Esophagus squamous epithelium (tissue), 5 donors: ENCODE measurements at regions of chr3 and their contacts with region 1.

Region 1: DNA sequence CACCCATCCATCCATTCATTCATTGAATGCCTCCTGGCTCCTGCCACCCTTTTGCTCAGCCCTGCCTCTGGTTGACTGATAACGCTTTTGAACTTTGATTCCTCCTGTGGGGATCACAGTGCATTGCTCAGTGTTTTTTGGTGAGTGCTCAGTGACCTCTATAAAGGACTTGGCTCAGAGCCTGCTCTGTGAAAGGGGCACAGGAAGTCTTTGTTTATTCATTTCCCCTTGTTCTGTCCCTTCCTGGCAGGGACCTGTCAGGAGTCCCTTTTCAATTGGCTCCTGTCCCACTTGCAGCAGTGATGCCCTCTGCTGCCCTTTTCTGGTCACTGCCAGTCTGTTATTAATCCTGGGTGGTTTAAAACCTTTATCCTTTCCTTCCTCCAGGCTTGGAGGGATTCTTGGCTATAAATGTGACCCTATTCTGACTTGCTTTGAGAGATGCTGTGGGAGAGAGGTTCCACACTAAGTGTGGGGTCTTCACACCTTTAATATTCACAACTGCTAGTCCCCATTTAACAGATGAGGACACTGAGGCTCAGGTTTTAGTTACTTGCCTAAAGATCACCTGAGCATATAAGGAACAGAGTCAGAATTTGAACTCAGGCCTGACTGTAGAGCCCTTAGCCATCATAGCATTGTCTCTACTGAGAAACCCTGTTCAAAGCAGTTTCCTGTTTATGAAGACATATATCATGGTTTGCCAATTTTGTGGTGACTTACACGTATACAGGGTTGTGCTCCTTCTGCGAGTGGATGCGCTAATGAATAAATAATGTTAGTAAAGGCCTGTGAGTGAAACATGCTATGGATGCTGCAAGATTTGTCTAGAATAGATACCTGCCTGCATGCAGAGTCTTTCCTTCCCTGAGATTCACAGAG is 23.2 kb upstream of the TATDN2 start:
- DNase-seq: peak; percentile 27
- H3K4me3 ChIP-seq: no peak overlapping the region
- H3K27ac ChIP-seq: peak overlapping the region in 2 of 4 donors; percentile 14 to 19
- H3K4me1 ChIP-seq: peaks cover 8 to 52% (median 14%) of the 10 kb centered on the region in 3 donors
- H3K27me3 ChIP-seq: no peaks in the 10 kb centered on the region
- CTCF ChIP-seq: peak; percentile 72 to 92 (median 87)
- POLR2A ChIP-seq: no peak

Region 2: GRCh38 chr3:9826815-9827567 is 398.0 kb before region 1 on chr3:
- intact Hi-C with region 1: no loop called
- DNase-seq: no peak
- H3K4me3 ChIP-seq: no peak overlapping the region
- H3K27ac ChIP-seq: no peak overlapping the region
- H3K4me1 ChIP-seq: no peaks in the 10 kb centered on the region
- H3K27me3 ChIP-seq: no peaks in the 10 kb centered on the region
- CTCF ChIP-seq: peak in 4 of 6 experiments; percentile 10 to 48 (median 13)
- POLR2A ChIP-seq: no peak

Region 3: DNA sequence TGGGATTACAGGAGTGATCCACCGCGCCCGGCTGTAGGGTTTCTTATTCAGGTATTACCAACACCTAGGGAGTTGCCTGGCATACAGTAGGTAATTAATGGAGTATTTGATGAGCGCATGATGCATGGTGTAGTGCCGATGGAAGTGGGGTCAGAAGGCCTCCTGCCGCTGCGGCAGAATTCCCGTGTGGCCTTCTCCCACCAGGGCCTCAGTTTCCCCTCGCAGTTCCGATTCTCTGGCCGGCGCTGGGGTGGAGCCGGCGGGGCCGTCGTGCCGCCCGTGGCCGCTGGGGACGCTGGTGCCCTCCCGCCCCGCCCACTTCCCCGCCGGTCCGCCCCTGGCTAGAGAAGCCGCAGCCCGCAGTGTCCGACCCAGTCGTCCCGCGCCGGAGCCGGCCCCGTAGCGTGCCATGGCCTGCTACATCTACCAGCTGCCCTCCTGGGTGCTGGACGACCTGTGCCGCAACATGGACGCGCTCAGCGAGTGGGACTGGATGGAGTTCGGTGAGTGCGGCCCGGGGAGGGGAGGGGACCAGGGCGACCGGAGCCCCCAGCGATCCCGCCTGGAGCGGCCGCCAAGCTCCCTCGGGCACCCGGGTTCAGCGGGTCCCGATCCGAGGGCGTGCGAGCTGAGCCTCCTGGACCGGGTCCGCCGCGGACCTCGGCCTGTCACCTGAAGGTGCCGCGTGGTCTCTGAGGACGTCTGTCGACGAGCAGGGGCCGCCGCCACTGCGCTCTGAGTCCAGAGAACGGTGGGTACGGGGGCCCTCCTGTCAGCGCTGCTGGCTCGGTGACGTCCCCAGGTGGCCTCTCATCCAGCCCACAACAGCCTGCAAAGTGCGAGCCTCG is 60.3 kb before region 1 on chr3 and contains the start of gene IRAK2:
- intact Hi-C with region 1: loop called (anchors 10 kb)
- DNase-seq: no peak
- H3K4me3 ChIP-seq: peak within 1 kb of the TSS; percentile 53 to 91 (median 82)
- H3K27ac ChIP-seq: peak within 1 kb of the TSS; percentile 77 to 84 (median 82)
- H3K4me1 ChIP-seq: peaks cover 4 to 35% (median 4%) of the 10 kb centered on the region in 3 donors
- H3K27me3 ChIP-seq: no peaks in the 10 kb centered on the region
- CTCF ChIP-seq: peak; percentile 77 to 95 (median 92)
- POLR2A ChIP-seq: peak in 2 of 4 donors; percentile 45 to 66
- total RNA-seq, gene IRAK2: 4.4 to 23.3 (median 9.6) TPM